Mammary epithelial cell (primary cell): ENCODE measurements at regions of chr1 and their contacts with region 1.

Region 1: DNA sequence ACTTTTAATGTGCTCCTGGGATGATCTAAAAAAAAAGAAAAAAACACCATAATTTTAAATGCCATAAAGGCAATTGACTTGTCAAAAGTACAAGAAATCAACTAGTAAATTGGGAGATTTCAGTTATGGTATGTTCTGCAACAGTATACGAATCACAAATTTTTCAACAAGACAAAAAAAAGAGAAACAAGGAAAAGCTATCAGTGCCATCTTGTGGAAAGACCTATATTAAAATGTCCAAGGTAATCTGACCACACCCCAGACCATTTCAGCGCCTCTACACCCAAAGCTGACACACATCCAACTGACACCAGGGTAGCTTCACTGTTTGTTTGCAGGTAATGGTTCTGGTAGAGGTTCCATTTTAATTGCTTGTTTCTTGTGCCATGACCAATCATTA is 5.0 kb upstream of the DUSP23 start:
- DNase-seq: no peak
- H3K4me3 ChIP-seq: no peak overlapping the region
- H3K27ac ChIP-seq: no peak overlapping the region
- H3K4me1 ChIP-seq: peaks cover 15% of the 10 kb centered on the region
- H3K27me3 ChIP-seq: peaks cover 3% of the 10 kb centered on the region
- CTCF ChIP-seq: peak; percentile 10 to 28

Region 2: GRCh38 chr1:159214149-159214760 is 561.5 kb before region 1 on chr1:
- CTCF ChIA-PET with region 1: no interaction called
- dilution Hi-C with region 1: no loop called
- in situ Hi-C with region 1: no loop called
- intact Hi-C with region 1: loop called (anchors 1 kb)
- DNase-seq: peak; percentile 26
- H3K4me3 ChIP-seq: no peak overlapping the region
- H3K27ac ChIP-seq: no peak overlapping the region
- H3K4me1 ChIP-seq: peaks cover 3% of the 10 kb centered on the region
- H3K27me3 ChIP-seq: no peaks in the 10 kb centered on the region
- CTCF ChIP-seq: peak; percentile 93

Region 3: GRCh38 chr1:159612211-159612885 is 163.4 kb before region 1 on chr1:
- CTCF ChIA-PET with region 1: no interaction called
- dilution Hi-C with region 1: no loop called
- in situ Hi-C with region 1: no loop called
- intact Hi-C with region 1: no loop called
- DNase-seq: no peak
- H3K4me3 ChIP-seq: no peak overlapping the region
- H3K27ac ChIP-seq: no peak overlapping the region
- H3K4me1 ChIP-seq: no peaks in the 10 kb centered on the region
- H3K27me3 ChIP-seq: no peaks in the 10 kb centered on the region
- CTCF ChIP-seq: no peak

Region 4: DNA sequence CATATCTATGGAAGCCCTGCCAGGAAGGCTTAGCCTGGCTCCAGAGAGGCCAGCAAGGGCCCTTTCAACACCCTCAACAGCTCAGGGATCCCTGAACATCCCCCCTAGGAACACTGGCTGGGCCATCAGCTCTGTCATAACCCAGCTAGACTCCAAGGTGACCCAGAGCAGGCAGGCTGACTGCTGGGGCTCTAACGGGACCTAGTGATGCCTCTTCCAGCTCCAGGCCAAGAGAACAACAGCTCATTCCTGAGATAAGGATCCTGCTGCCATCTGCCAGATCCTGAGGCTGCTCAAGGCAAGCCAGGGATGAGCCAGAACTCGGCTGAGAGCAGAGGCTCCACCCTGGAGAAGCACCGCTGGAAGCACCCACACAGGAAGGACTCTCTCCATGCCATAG is 84.7 kb after region 1 on chr1:
- CTCF ChIA-PET with region 1: no interaction called
- dilution Hi-C with region 1: no loop called
- in situ Hi-C with region 1: no loop called
- intact Hi-C with region 1: no loop called
- DNase-seq: no peak
- H3K4me3 ChIP-seq: no peak overlapping the region
- H3K27ac ChIP-seq: no peak overlapping the region
- H3K4me1 ChIP-seq: no peaks in the 10 kb centered on the region
- H3K27me3 ChIP-seq: no peaks in the 10 kb centered on the region
- CTCF ChIP-seq: no peak